ENCODE measurements at regions of chr10 and their contacts with region 1.

Region 1: GRCh38 chr10:30742471-30742870 is 112.9 kb upstream of the LYZL2 start:
- DNase-seq: no peak
- ATAC-seq: no peak
- H3K4me3 ChIP-seq: no peak overlapping the region
- H3K4me3 Mint-ChIP-seq: no peak overlapping the region
- H3K27ac ChIP-seq: no peak overlapping the region
- H3K27ac Mint-ChIP-seq: no peak overlapping the region
- H3K4me1 ChIP-seq: peaks cover 0 to 7% of the 10 kb centered on the region in 2 experiments
- H3K4me1 Mint-ChIP-seq: peaks cover 0 to 2% (median 0%) of the 10 kb centered on the region in 3 donors
- H3K27me3 ChIP-seq: peaks cover 0 to 19% of the 10 kb centered on the region in 2 experiments
- H3K27me3 Mint-ChIP-seq: peaks cover 0 to 5% of the 10 kb centered on the region in 2 donors

Region 2: GRCh38 chr10:30160178-30160982 is 582.1 kb before region 1 on chr10:
- CTCF ChIA-PET with region 1: no interaction called
- POLR2A ChIA-PET with region 1: no interaction called
- DNase-seq: no peak
- ATAC-seq: no peak
- H3K4me3 ChIP-seq: no peak overlapping the region
- H3K4me3 Mint-ChIP-seq: no peak overlapping the region
- H3K27ac ChIP-seq: no peak overlapping the region
- H3K27ac Mint-ChIP-seq: no peak overlapping the region
- H3K4me1 ChIP-seq: peaks cover 0 to 3% of the 10 kb centered on the region in 2 experiments
- H3K4me1 Mint-ChIP-seq: peaks cover 4 to 6% (median 5%) of the 10 kb centered on the region in 3 donors
- H3K27me3 ChIP-seq: peaks cover 0 to 22% of the 10 kb centered on the region in 2 experiments
- H3K27me3 Mint-ChIP-seq: peaks cover 29 to 34% of the 10 kb centered on the region in 2 donors

Region 3: GRCh38 chr10:30591249-30591670 is 151.2 kb before region 1 on chr10:
- CTCF ChIA-PET with region 1: no interaction called
- POLR2A ChIA-PET with region 1: no interaction called
- DNase-seq: peak in 31 of 35 experiments; percentile 1 to 80 (median 16)
- ATAC-seq: peak; percentile 50 to 67 (median 62)
- H3K4me3 ChIP-seq: no peak overlapping the region
- H3K4me3 Mint-ChIP-seq: no peak overlapping the region
- H3K27ac ChIP-seq: no peak overlapping the region
- H3K27ac Mint-ChIP-seq: no peak overlapping the region
- H3K4me1 ChIP-seq: no peaks in the 10 kb centered on the region
- H3K4me1 Mint-ChIP-seq: peaks cover 0 to 9% (median 2%) of the 10 kb centered on the region in 3 donors
- H3K27me3 ChIP-seq: peaks cover 0 to 25% of the 10 kb centered on the region in 2 experiments
- H3K27me3 Mint-ChIP-seq: peaks cover 11 to 16% of the 10 kb centered on the region in 2 donors

Region 4: GRCh38 chr10:30763918-30764317 is 21.4 kb after region 1 on chr10:
- CTCF ChIA-PET with region 1: interaction called in 1 of 2 experiments, 10 read pairs
- POLR2A ChIA-PET with region 1: no interaction called
- DNase-seq: no peak
- ATAC-seq: no peak
- H3K4me3 ChIP-seq: no peak overlapping the region
- H3K4me3 Mint-ChIP-seq: no peak overlapping the region
- H3K27ac ChIP-seq: no peak overlapping the region
- H3K27ac Mint-ChIP-seq: no peak overlapping the region
- H3K4me1 ChIP-seq: no peaks in the 10 kb centered on the region
- H3K4me1 Mint-ChIP-seq: no peaks in the 10 kb centered on the region
- H3K27me3 ChIP-seq: no peaks in the 10 kb centered on the region
- H3K27me3 Mint-ChIP-seq: no peaks in the 10 kb centered on the region

Region 5: GRCh38 chr10:31239961-31240360 is 497.5 kb after region 1 on chr10:
- CTCF ChIA-PET with region 1: no interaction called
- POLR2A ChIA-PET with region 1: no interaction called
- DNase-seq: no peak
- ATAC-seq: no peak
- H3K4me3 ChIP-seq: no peak overlapping the region
- H3K4me3 Mint-ChIP-seq: no peak overlapping the region
- H3K27ac ChIP-seq: no peak overlapping the region
- H3K27ac Mint-ChIP-seq: no peak overlapping the region
- H3K4me1 ChIP-seq: no peaks in the 10 kb centered on the region
- H3K4me1 Mint-ChIP-seq: no peaks in the 10 kb centered on the region
- H3K27me3 ChIP-seq: no peaks in the 10 kb centered on the region
- H3K27me3 Mint-ChIP-seq: no peaks in the 10 kb centered on the region